ENCODE measurements at regions of chr22 and their contacts with region 1.

Region 1: GRCh38 chr22:41301105-41302020 is at the start of gene ZC3H7B:
- DNase-seq: peak; percentile 84 to 92 (median 85)
- H3K4me3 ChIP-seq: peak within 1 kb of the TSS; percentile 54 to 76
- H3K4me3 Mint-ChIP-seq: peak within 1 kb of the TSS; percentile 86 to 89 (median 88)
- H3K27ac ChIP-seq: peak within 1 kb of the TSS; percentile 88
- H3K27ac Mint-ChIP-seq: peak within 1 kb of the TSS; percentile 83 to 97 (median 96)
- H3K4me1 ChIP-seq: peaks cover 24% of the 10 kb centered on the region
- H3K4me1 Mint-ChIP-seq: peaks cover 19 to 38% (median 30%) of the 10 kb centered on the region in 4 donors
- H3K27me3 ChIP-seq: no peaks in the 10 kb centered on the region
- H3K27me3 Mint-ChIP-seq: no peaks in the 10 kb centered on the region
- total RNA-seq, gene ZC3H7B: 39.4 to 40.3 TPM

Region 2: GRCh38 chr22:41381329-41382097 is 80.2 kb after region 1 on chr22 and contains the start of gene TEF:
- CTCF ChIA-PET with region 1: interaction called, 4 read pairs
- POLR2A ChIA-PET with region 1: interaction called, 17 read pairs
- intact Hi-C with region 1: loop called (anchors 1 kb)
- DNase-seq: peak; percentile 99
- H3K4me3 ChIP-seq: peak within 1 kb of the TSS; percentile 65 to 88
- H3K4me3 Mint-ChIP-seq: peak within 1 kb of the TSS; percentile 90 to 97 (median 94)
- H3K27ac ChIP-seq: peak within 1 kb of the TSS; percentile 87
- H3K27ac Mint-ChIP-seq: peak within 1 kb of the TSS; percentile 98 to 99 (median 98)
- H3K4me1 ChIP-seq: peaks cover 18% of the 10 kb centered on the region
- H3K4me1 Mint-ChIP-seq: peaks cover 12 to 36% (median 22%) of the 10 kb centered on the region in 4 donors
- H3K27me3 ChIP-seq: no peaks in the 10 kb centered on the region
- H3K27me3 Mint-ChIP-seq: no peaks in the 10 kb centered on the region
- total RNA-seq, gene TEF: 6.5 to 8.8 TPM

Measured in CD4-positive, alpha-beta memory T cell (primary cell).